ENCODE measurements at regions of chr16 and their contacts with region 1.

Region 1: DNA sequence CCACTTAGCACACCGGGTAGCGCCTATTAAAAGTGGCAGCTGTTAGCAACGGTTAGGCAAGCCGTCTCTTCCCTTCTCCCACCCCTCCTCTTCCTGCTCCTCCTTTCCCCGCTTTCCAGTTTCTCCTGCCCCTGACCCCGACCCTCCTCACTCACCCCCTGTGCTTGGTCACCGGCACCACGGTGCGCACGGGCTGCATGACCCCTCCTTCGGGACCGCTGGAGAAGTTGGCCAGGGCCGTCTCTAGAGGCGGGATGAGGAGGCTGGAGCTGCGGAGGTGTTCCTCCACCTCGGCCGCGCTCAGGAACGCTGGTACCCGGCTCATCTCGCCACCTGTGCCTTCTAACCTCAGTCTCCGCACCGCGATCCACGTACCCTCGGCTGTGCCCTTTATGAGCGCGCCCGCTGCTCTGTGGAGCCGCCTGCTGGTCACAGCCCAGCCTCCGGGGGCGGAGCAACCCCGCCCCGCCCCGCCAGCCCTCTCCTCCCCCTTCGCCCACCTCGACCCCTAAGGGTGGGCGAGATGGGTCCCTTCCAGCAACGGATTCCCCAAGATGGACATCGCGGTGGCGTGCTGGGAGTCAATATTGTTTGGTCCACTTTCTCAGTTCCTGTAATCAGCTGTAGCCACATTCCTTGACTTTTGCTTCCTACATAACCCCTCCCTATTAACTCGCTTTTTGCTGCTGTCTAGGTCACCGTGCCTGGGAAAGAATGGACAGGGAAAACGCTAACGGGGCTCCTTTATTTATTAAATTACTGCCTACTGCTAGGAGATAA is at the start of gene CRYM:
- DNase-seq: peak; percentile 80
- ATAC-seq: peak; percentile 96
- H3K4me3 Mint-ChIP-seq: no peak within 1 kb of the TSS
- H3K27ac Mint-ChIP-seq: no peak within 1 kb of the TSS
- H3K4me1 Mint-ChIP-seq: no peaks in the 10 kb centered on the region
- H3K27me3 Mint-ChIP-seq: peaks cover 61% of the 10 kb centered on the region
- total RNA-seq, gene CRYM: not detected

Region 2: GRCh38 chr16:20833086-20833485 is 445.0 kb before region 1 on chr16:
- CTCF ChIA-PET with region 1: no interaction called
- POLR2A ChIA-PET with region 1: no interaction called
- intact Hi-C with region 1: no loop called
- DNase-seq: no peak
- ATAC-seq: no peak
- H3K4me3 Mint-ChIP-seq: no peak overlapping the region
- H3K27ac Mint-ChIP-seq: no peak overlapping the region
- H3K4me1 Mint-ChIP-seq: no peaks in the 10 kb centered on the region
- H3K27me3 Mint-ChIP-seq: no peaks in the 10 kb centered on the region

Region 3: GRCh38 chr16:21158208-21159110 is 119.7 kb before region 1 on chr16 and contains the start of gene LDAF1:
- CTCF ChIA-PET with region 1: interaction called, 3 read pairs
- POLR2A ChIA-PET with region 1: no interaction called
- intact Hi-C with region 1: loop called in 1 of 2 experiments (anchors 1 kb)
- DNase-seq: peak; percentile 90
- ATAC-seq: peak; percentile 99
- H3K4me3 Mint-ChIP-seq: peak within 1 kb of the TSS; percentile 88
- H3K27ac Mint-ChIP-seq: peak within 1 kb of the TSS; percentile 81
- H3K4me1 Mint-ChIP-seq: peaks cover 20% of the 10 kb centered on the region
- H3K27me3 Mint-ChIP-seq: no peaks in the 10 kb centered on the region
- total RNA-seq, gene LDAF1: 7.2 to 11.7 TPM

Region 4: DNA sequence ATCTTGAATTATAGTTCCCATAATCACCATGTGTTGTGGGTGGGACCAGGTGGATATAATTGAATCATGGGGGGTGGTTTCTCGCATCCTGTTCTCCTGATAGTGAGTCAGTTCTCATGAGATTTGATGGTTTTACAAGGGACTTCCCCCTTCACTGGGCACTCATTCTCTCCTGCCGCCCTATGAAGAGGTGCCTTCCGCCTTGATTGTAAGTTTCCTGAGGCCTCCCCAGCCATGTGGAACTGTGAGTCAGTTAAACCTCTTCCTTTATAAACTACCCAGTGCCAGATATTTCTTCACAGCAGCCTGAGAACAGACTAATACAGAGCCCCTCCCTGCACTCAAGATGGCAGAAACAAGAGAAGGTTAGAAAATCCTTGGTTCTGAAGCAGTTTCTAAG is 93.3 kb before region 1 on chr16:
- CTCF ChIA-PET with region 1: interaction called, 6 read pairs
- POLR2A ChIA-PET with region 1: no interaction called
- intact Hi-C with region 1: loop called (anchors 1 kb)
- DNase-seq: peak; percentile 50
- ATAC-seq: peak; percentile 81
- H3K4me3 Mint-ChIP-seq: no peak overlapping the region
- H3K27ac Mint-ChIP-seq: peak overlapping the region; percentile 44
- H3K4me1 Mint-ChIP-seq: peaks cover 28% of the 10 kb centered on the region
- H3K27me3 Mint-ChIP-seq: peaks cover 3% of the 10 kb centered on the region

Region 5: GRCh38 chr16:21321736-21322135 is 43.6 kb after region 1 on chr16:
- CTCF ChIA-PET with region 1: no interaction called
- POLR2A ChIA-PET with region 1: no interaction called
- intact Hi-C with region 1: no loop called
- DNase-seq: no peak
- ATAC-seq: no peak
- H3K4me3 Mint-ChIP-seq: no peak overlapping the region
- H3K27ac Mint-ChIP-seq: no peak overlapping the region
- H3K4me1 Mint-ChIP-seq: no peaks in the 10 kb centered on the region
- H3K27me3 Mint-ChIP-seq: peaks cover 2% of the 10 kb centered on the region